ENCODE measurements at regions of chr10 and their contacts with region 1.

Region 1: GRCh38 chr10:122342293-122343134 is 32.0 kb upstream of the PLEKHA1 start:
- DNase-seq: peak in 1 of 2 experiments; percentile 76
- H3K4me3 ChIP-seq: no peak overlapping the region
- H3K4me3 Mint-ChIP-seq: no peak overlapping the region
- H3K27ac Mint-ChIP-seq: no peak overlapping the region
- H3K4me1 ChIP-seq: peaks cover 4% of the 10 kb centered on the region; the same call in 1 of the 2 replicates
- H3K4me1 Mint-ChIP-seq: peaks cover 17% of the 10 kb centered on the region
- H3K27me3 ChIP-seq: no peaks in the 10 kb centered on the region
- H3K27me3 Mint-ChIP-seq: no peaks in the 10 kb centered on the region
- CTCF ChIP-seq: peak; percentile 72 to 81

Region 2: GRCh38 chr10:121865554-121865953 is 477.0 kb before region 1 on chr10:
- CTCF ChIA-PET with region 1: no interaction called
- POLR2A ChIA-PET with region 1: no interaction called
- intact Hi-C with region 1: no loop called
- DNase-seq: no peak
- H3K4me3 ChIP-seq: no peak overlapping the region
- H3K4me3 Mint-ChIP-seq: no peak overlapping the region
- H3K27ac Mint-ChIP-seq: no peak overlapping the region
- H3K4me1 ChIP-seq: no peaks in the 10 kb centered on the region
- H3K4me1 Mint-ChIP-seq: no peaks in the 10 kb centered on the region
- H3K27me3 ChIP-seq: no peaks in the 10 kb centered on the region
- H3K27me3 Mint-ChIP-seq: no peaks in the 10 kb centered on the region
- CTCF ChIP-seq: no peak

Region 3: DNA sequence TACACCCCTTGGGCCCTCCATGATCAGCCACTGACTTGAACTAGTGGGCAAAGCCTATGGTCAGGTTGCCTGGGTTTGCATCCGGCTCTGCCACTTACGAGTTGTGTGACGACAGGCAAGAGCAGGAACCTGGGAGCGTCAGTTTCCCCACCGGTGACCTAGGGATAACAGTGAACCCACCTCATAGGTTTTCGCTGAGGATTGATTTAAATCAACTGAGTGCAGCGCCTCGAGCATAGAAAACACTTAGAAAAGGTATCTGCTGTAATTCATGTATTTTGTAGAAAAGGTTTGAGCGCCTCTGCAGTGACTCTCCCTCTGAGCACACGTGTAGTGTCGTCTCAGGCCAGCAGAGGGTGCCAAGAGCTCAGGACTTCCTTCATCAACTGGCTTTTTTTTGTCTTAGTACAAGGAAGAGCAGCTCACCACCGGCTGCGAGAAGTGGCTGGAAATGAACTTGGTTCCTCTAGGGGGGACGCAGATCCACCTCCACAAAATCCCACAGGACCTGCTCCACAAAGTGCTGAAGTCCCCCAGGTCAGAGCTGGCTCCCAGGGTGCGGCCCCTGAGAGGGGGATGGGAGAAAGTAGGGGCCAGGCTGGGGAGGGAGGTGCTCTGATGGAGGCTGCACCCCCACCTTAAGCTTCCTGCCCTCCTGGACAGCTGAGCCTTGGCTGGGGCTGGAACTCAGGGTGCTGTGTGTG is 43.8 kb before region 1 on chr10:
- CTCF ChIA-PET with region 1: interaction called, 8 read pairs
- POLR2A ChIA-PET with region 1: no interaction called
- intact Hi-C with region 1: loop called (anchors 1 kb)
- DNase-seq: peak; percentile 70 to 75
- H3K4me3 ChIP-seq: 0 out of 2 replicates have a peak overlapping the region, but pooled peaks have one; percentile 18
- H3K4me3 Mint-ChIP-seq: no peak overlapping the region
- H3K27ac Mint-ChIP-seq: no peak overlapping the region
- H3K4me1 ChIP-seq: peaks cover 15% of the 10 kb centered on the region
- H3K4me1 Mint-ChIP-seq: peaks cover 11% of the 10 kb centered on the region
- H3K27me3 ChIP-seq: no peaks in the 10 kb centered on the region
- H3K27me3 Mint-ChIP-seq: no peaks in the 10 kb centered on the region
- CTCF ChIP-seq: peak; percentile 92 to 96

Region 4: GRCh38 chr10:122374237-122374869 is 31.8 kb after region 1 on chr10 and contains the start of gene PLEKHA1:
- CTCF ChIA-PET with region 1: interaction called, 10 read pairs
- POLR2A ChIA-PET with region 1: interaction called, 16 read pairs
- intact Hi-C with region 1: loop called (anchors 1 kb)
- DNase-seq: peak; percentile 94 to 97
- H3K4me3 ChIP-seq: peak within 1 kb of the TSS; percentile 83
- H3K4me3 Mint-ChIP-seq: peak within 1 kb of the TSS; percentile 91
- H3K27ac Mint-ChIP-seq: peak within 1 kb of the TSS; percentile 89
- H3K4me1 ChIP-seq: peaks cover 23% of the 10 kb centered on the region
- H3K4me1 Mint-ChIP-seq: peaks cover 21% of the 10 kb centered on the region
- H3K27me3 ChIP-seq: no peaks in the 10 kb centered on the region
- H3K27me3 Mint-ChIP-seq: no peaks in the 10 kb centered on the region
- CTCF ChIP-seq: peak in 1 of 2 experiments; percentile 20
- total RNA-seq, gene PLEKHA1: 48.4 and 48.5 TPM in 2 replicates

Region 5: GRCh38 chr10:122435212-122435827 is 92.8 kb after region 1 on chr10:
- CTCF ChIA-PET with region 1: interaction called, 12 read pairs
- POLR2A ChIA-PET with region 1: no interaction called
- intact Hi-C with region 1: loop called (anchors 1 kb)
- DNase-seq: peak in 1 of 2 experiments; percentile 49
- H3K4me3 ChIP-seq: no peak overlapping the region
- H3K4me3 Mint-ChIP-seq: no peak overlapping the region
- H3K27ac Mint-ChIP-seq: no peak overlapping the region
- H3K4me1 ChIP-seq: no peaks in the 10 kb centered on the region
- H3K4me1 Mint-ChIP-seq: no peaks in the 10 kb centered on the region
- H3K27me3 ChIP-seq: no peaks in the 10 kb centered on the region
- H3K27me3 Mint-ChIP-seq: no peaks in the 10 kb centered on the region
- CTCF ChIP-seq: peak; percentile 45 to 87